CD8-positive, alpha-beta T cell (primary cell): ENCODE measurements at regions of chr17 and their contacts with region 1.

Region 1: GRCh38 chr17:44864866-44865660 is 17.4 kb downstream of the HIGD1B start:
- DNase-seq: peak; percentile 26 to 82 (median 71)
- ATAC-seq: peak; percentile 83
- H3K4me3 ChIP-seq: no peak overlapping the region
- H3K4me3 Mint-ChIP-seq: no peak overlapping the region
- H3K27ac ChIP-seq: no peak overlapping the region
- H3K27ac Mint-ChIP-seq: no peak overlapping the region
- H3K4me1 ChIP-seq: no peaks in the 10 kb centered on the region
- H3K4me1 Mint-ChIP-seq: no peaks in the 10 kb centered on the region
- H3K27me3 ChIP-seq: no peaks in the 10 kb centered on the region
- H3K27me3 Mint-ChIP-seq: no peaks in the 10 kb centered on the region
- CTCF ChIP-seq: peak; percentile 82

Region 2: GRCh38 chr17:44844390-44844830 is 20.7 kb before region 1 on chr17:
- CTCF ChIA-PET with region 1: interaction called, 19 read pairs
- POLR2A ChIA-PET with region 1: no interaction called
- intact Hi-C with region 1: no loop called
- DNase-seq: no peak
- ATAC-seq: no peak
- H3K4me3 ChIP-seq: no peak overlapping the region
- H3K4me3 Mint-ChIP-seq: no peak overlapping the region
- H3K27ac ChIP-seq: no peak overlapping the region
- H3K27ac Mint-ChIP-seq: no peak overlapping the region
- H3K4me1 ChIP-seq: no peaks in the 10 kb centered on the region
- H3K4me1 Mint-ChIP-seq: no peaks in the 10 kb centered on the region
- H3K27me3 ChIP-seq: no peaks in the 10 kb centered on the region
- H3K27me3 Mint-ChIP-seq: no peaks in the 10 kb centered on the region
- CTCF ChIP-seq: no peak

Region 3: GRCh38 chr17:44854192-44854591 is 10.9 kb before region 1 on chr17:
- CTCF ChIA-PET with region 1: interaction called, 13 read pairs
- POLR2A ChIA-PET with region 1: no interaction called
- intact Hi-C with region 1: no loop called
- DNase-seq: no peak
- ATAC-seq: no peak
- H3K4me3 ChIP-seq: no peak overlapping the region
- H3K4me3 Mint-ChIP-seq: no peak overlapping the region
- H3K27ac ChIP-seq: no peak overlapping the region
- H3K27ac Mint-ChIP-seq: no peak overlapping the region
- H3K4me1 ChIP-seq: no peaks in the 10 kb centered on the region
- H3K4me1 Mint-ChIP-seq: no peaks in the 10 kb centered on the region
- H3K27me3 ChIP-seq: no peaks in the 10 kb centered on the region
- H3K27me3 Mint-ChIP-seq: no peaks in the 10 kb centered on the region
- CTCF ChIP-seq: no peak

Region 4: GRCh38 chr17:44878627-44879221 is 13.7 kb after region 1 on chr17:
- CTCF ChIA-PET with region 1: interaction called, 37 read pairs
- POLR2A ChIA-PET with region 1: interaction called, 3 read pairs
- intact Hi-C with region 1: no loop called
- DNase-seq: peak in 5 of 9 experiments; percentile 19 to 44 (median 27)
- ATAC-seq: no peak
- H3K4me3 ChIP-seq: no peak overlapping the region
- H3K4me3 Mint-ChIP-seq: no peak overlapping the region
- H3K27ac ChIP-seq: no peak overlapping the region
- H3K27ac Mint-ChIP-seq: no peak overlapping the region
- H3K4me1 ChIP-seq: no peaks in the 10 kb centered on the region
- H3K4me1 Mint-ChIP-seq: no peaks in the 10 kb centered on the region
- H3K27me3 ChIP-seq: no peaks in the 10 kb centered on the region
- H3K27me3 Mint-ChIP-seq: no peaks in the 10 kb centered on the region
- CTCF ChIP-seq: peak; percentile 34